HCT116 (cell line): ENCODE measurements at regions of chr20 and their contacts with region 1.

Region 1: GRCh38 chr20:25269594-25270091 is 21.8 kb downstream of the PYGB start:
- DNase-seq: no peak
- ATAC-seq: no peak
- H3K4me3 ChIP-seq: no peak overlapping the region
- H3K27ac ChIP-seq: no peak overlapping the region
- H3K4me1 ChIP-seq: no peaks in the 10 kb centered on the region
- H3K27me3 ChIP-seq: no peaks in the 10 kb centered on the region
- CTCF ChIP-seq: no peak
- POLR2A ChIP-seq: no peak
- RAD21 ChIP-seq: no peak

Region 2: DNA sequence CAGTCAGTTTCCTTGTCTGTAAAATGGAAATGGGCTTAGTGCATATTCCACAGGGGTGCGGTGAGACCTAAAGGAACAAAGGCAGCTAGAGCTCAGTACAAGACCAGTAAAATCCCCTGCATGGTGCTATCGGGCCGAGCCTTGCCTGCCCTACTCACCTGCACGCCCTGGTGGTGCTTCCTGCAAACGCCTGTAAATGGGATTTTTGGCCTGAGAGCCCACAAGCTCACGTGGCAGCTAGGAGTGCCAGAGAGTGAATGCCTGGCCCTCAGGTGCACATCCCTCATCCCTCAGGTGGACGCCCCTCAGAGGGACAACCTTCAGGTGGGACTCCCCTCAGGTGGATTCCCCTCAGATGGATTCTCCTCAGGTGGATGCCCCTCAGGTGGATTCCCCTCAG is 139.7 kb before region 1 on chr20:
- CTCF ChIA-PET with region 1: no interaction called
- POLR2A ChIA-PET with region 1: no interaction called
- RAD21 ChIA-PET with region 1: no interaction called
- intact Hi-C with region 1: no loop called
- DNase-seq: no peak
- ATAC-seq: no peak; the same call in 1 of the 2 replicates
- H3K4me3 ChIP-seq: no peak overlapping the region
- H3K27ac ChIP-seq: no peak overlapping the region
- H3K4me1 ChIP-seq: no peaks in the 10 kb centered on the region
- H3K27me3 ChIP-seq: no peaks in the 10 kb centered on the region
- CTCF ChIP-seq: no peak
- POLR2A ChIP-seq: no peak
- RAD21 ChIP-seq: no peak

Region 3: GRCh38 chr20:25204550-25205276 is 64.9 kb before region 1 on chr20:
- CTCF ChIA-PET with region 1: no interaction called
- POLR2A ChIA-PET with region 1: no interaction called
- RAD21 ChIA-PET with region 1: no interaction called
- intact Hi-C with region 1: no loop called
- DNase-seq: no peak
- ATAC-seq: no peak
- H3K4me3 ChIP-seq: no peak overlapping the region
- H3K27ac ChIP-seq: no peak overlapping the region
- H3K4me1 ChIP-seq: peaks cover 0 to 3% of the 10 kb centered on the region in 2 experiments; a peak in 1 of 4 replicates
- H3K27me3 ChIP-seq: no peaks in the 10 kb centered on the region
- CTCF ChIP-seq: no peak
- POLR2A ChIP-seq: no peak
- RAD21 ChIP-seq: no peak

Region 4: GRCh38 chr20:25308671-25309394 is 39.2 kb after region 1 on chr20:
- CTCF ChIA-PET with region 1: no interaction called
- POLR2A ChIA-PET with region 1: no interaction called
- RAD21 ChIA-PET with region 1: no interaction called
- intact Hi-C with region 1: no loop called
- DNase-seq: peak; percentile 28
- ATAC-seq: peak; percentile 53
- H3K4me3 ChIP-seq: peak overlapping the region; percentile 11 to 53
- H3K27ac ChIP-seq: peak overlapping the region; percentile 79
- H3K4me1 ChIP-seq: peaks cover 37 to 42% of the 10 kb centered on the region in 2 experiments
- H3K27me3 ChIP-seq: no peaks in the 10 kb centered on the region
- CTCF ChIP-seq: no peak
- POLR2A ChIP-seq: no peak
- RAD21 ChIP-seq: no peak

Region 5: GRCh38 chr20:25319241-25320034 is 49.8 kb after region 1 on chr20:
- CTCF ChIA-PET with region 1: no interaction called
- POLR2A ChIA-PET with region 1: no interaction called
- RAD21 ChIA-PET with region 1: no interaction called
- intact Hi-C with region 1: loop called (anchors 10 kb)
- DNase-seq: no peak
- ATAC-seq: no peak
- H3K4me3 ChIP-seq: no peak overlapping the region
- H3K27ac ChIP-seq: no peak overlapping the region
- H3K4me1 ChIP-seq: peaks cover 0 to 5% of the 10 kb centered on the region in 2 experiments; a peak in 1 of 4 replicates
- H3K27me3 ChIP-seq: no peaks in the 10 kb centered on the region
- CTCF ChIP-seq: no peak
- POLR2A ChIP-seq: no peak
- RAD21 ChIP-seq: no peak

Region 6: GRCh38 chr20:25356271-25356933 is 86.8 kb after region 1 on chr20:
- CTCF ChIA-PET with region 1: no interaction called
- POLR2A ChIA-PET with region 1: no interaction called
- RAD21 ChIA-PET with region 1: no interaction called
- intact Hi-C with region 1: no loop called
- DNase-seq: no peak
- ATAC-seq: no peak
- H3K4me3 ChIP-seq: no peak overlapping the region
- H3K27ac ChIP-seq: no peak overlapping the region
- H3K4me1 ChIP-seq: peaks cover 15 to 16% of the 10 kb centered on the region in 2 experiments
- H3K27me3 ChIP-seq: no peaks in the 10 kb centered on the region
- CTCF ChIP-seq: no peak
- POLR2A ChIP-seq: no peak
- RAD21 ChIP-seq: no peak